Heart right ventricle (tissue), 16 donors: ENCODE measurements at regions of chr6 and their contacts with region 1.

Region 1: GRCh38 chr6:6749702-6750491 is 161.4 kb downstream of the LY86 start:
- DNase-seq: peak; percentile 42 to 63
- ATAC-seq: peak; percentile 14 to 61 (median 32)
- H3K4me3 ChIP-seq: peak overlapping the region in 1 of 10 donors; percentile 13
- H3K27ac ChIP-seq: peak overlapping the region; percentile 76 to 91 (median 84)
- H3K4me1 ChIP-seq: peaks cover 16 to 61% (median 43%) of the 10 kb centered on the region in 9 donors
- H3K27me3 ChIP-seq: no peaks in the 10 kb centered on the region
- CTCF ChIP-seq: no peak

Region 2: DNA sequence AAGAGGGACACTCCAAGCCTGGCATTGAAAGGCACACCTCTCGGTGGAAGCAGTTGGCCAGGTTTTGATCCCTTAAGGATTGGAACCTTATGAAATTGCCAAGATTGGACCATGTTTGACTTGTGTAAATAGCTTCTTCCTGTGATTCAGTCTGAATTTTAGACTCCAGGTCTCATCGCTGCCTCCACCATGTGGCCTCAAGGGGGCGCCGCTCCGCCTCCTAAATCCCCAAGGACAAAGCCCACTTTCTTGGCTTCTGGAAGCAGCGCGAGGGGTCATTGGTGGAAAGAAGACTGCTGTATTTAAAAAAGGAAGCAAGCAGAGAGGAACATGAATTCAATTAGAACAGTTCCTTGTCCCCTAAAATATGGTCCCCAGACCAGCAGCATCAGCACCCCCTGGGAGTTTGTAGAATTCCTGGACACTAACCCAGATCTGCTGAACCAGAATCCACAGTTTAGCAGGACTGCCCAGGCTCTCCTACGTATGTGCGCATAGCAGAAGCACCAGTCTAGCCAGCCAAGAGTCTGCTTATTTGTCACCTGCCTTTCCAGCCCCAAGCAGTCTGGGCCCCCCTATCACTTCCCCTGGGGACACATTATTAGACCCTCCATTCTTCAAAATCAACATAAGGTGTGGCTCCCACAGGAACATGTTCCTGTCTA is 52.9 kb before region 1 on chr6:
- intact Hi-C with region 1: no loop called
- DNase-seq: peak; percentile 56 to 65
- ATAC-seq: peak in 2 of 8 donors; percentile 23 to 32
- H3K4me3 ChIP-seq: no peak overlapping the region
- H3K27ac ChIP-seq: peak overlapping the region in 8 of 10 donors; percentile 67 to 88 (median 77)
- H3K4me1 ChIP-seq: peaks cover 18 to 63% (median 52%) of the 10 kb centered on the region in 9 donors
- H3K27me3 ChIP-seq: no peaks in the 10 kb centered on the region
- CTCF ChIP-seq: peak; percentile 56 to 83 (median 77)

Region 3: GRCh38 chr6:6820641-6821238 is 70.8 kb after region 1 on chr6:
- intact Hi-C with region 1: loop called in 3 of 10 experiments (anchors 5 to 10 kb)
- DNase-seq: no peak
- ATAC-seq: no peak
- H3K4me3 ChIP-seq: no peak overlapping the region
- H3K27ac ChIP-seq: no peak overlapping the region
- H3K4me1 ChIP-seq: peaks cover 0 to 22% (median 10%) of the 10 kb centered on the region in 9 donors
- H3K27me3 ChIP-seq: no peaks in the 10 kb centered on the region
- CTCF ChIP-seq: no peak

Region 4: GRCh38 chr6:6826095-6826901 is 76.4 kb after region 1 on chr6:
- intact Hi-C with region 1: loop called in 2 of 10 experiments (anchors 5 kb)
- DNase-seq: peak; percentile 45 to 60
- ATAC-seq: peak; percentile 75 to 94 (median 88)
- H3K4me3 ChIP-seq: no peak overlapping the region
- H3K27ac ChIP-seq: peak overlapping the region; percentile 46 to 90 (median 77)
- H3K4me1 ChIP-seq: peaks cover 4 to 44% (median 22%) of the 10 kb centered on the region in 9 donors
- H3K27me3 ChIP-seq: no peaks in the 10 kb centered on the region
- CTCF ChIP-seq: no peak

Region 5: GRCh38 chr6:6890400-6890858 is 140.5 kb after region 1 on chr6:
- intact Hi-C with region 1: loop called in 1 of 10 experiments (anchors 10 kb)
- DNase-seq: peak; percentile 48 to 62
- ATAC-seq: peak; percentile 30 to 72 (median 52)
- H3K4me3 ChIP-seq: peak overlapping the region in 1 of 10 donors; percentile 0
- H3K27ac ChIP-seq: peak overlapping the region in 8 of 10 donors; percentile 7 to 85 (median 78)
- H3K4me1 ChIP-seq: peaks cover 9 to 66% (median 36%) of the 10 kb centered on the region in 9 donors
- H3K27me3 ChIP-seq: no peaks in the 10 kb centered on the region
- CTCF ChIP-seq: no peak

Region 6: DNA sequence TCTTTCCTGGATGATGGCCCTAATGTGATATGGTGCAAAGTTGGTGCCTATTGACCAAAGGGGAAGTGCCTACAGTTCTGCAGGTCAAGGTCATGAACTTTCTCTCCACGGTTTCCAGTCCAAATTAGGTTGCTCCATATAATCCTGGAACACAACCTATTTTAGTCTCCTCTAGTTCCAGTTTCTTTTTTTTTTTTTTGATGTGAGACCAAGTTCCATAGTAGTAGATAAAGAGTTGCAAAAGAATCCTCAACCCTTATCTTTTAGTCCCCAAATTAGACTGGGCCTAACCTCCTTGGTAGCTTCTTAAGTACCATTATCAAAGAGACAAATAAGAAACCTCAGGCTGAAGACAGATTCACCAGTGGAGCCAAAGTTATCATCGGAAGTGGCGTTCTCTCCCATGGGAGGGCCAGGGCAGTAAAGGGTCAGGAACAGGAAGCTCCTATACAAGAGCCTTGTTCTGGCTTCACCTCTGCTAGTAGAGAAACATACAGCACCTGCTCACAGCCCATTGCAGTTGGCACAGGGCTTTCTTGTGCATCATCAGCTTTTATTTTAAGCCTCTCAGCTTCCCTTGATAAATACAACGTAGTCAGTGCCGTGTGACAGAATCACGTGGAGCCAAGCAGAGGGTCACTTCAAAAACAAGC is 225.7 kb after region 1 on chr6:
- intact Hi-C with region 1: loop called in 1 of 10 experiments (anchors 5 kb)
- DNase-seq: peak in 1 of 2 donors; percentile 69
- ATAC-seq: peak; percentile 79 to 95 (median 90)
- H3K4me3 ChIP-seq: no peak overlapping the region
- H3K27ac ChIP-seq: peak overlapping the region; percentile 24 to 79 (median 69)
- H3K4me1 ChIP-seq: peaks cover 0 to 19% (median 13%) of the 10 kb centered on the region in 9 donors
- H3K27me3 ChIP-seq: no peaks in the 10 kb centered on the region
- CTCF ChIP-seq: no peak

Region 7: GRCh38 chr6:7051233-7052114 is 301.6 kb after region 1 on chr6:
- intact Hi-C with region 1: loop called in 1 of 10 experiments (anchors 5 kb)
- DNase-seq: peak; percentile 38 to 64
- ATAC-seq: peak; percentile 58 to 86 (median 78)
- H3K4me3 ChIP-seq: peak overlapping the region; percentile 44 to 76 (median 67)
- H3K27ac ChIP-seq: peak overlapping the region in 9 of 10 donors; percentile 54 to 92 (median 74)
- H3K4me1 ChIP-seq: peaks cover 0 to 50% (median 21%) of the 10 kb centered on the region in 9 donors
- H3K27me3 ChIP-seq: peaks cover 0 to 6% (median 0%) of the 10 kb centered on the region in 7 donors
- CTCF ChIP-seq: no peak